ENCODE measurements at regions of chr20 and their contacts with region 1.

Region 1: DNA sequence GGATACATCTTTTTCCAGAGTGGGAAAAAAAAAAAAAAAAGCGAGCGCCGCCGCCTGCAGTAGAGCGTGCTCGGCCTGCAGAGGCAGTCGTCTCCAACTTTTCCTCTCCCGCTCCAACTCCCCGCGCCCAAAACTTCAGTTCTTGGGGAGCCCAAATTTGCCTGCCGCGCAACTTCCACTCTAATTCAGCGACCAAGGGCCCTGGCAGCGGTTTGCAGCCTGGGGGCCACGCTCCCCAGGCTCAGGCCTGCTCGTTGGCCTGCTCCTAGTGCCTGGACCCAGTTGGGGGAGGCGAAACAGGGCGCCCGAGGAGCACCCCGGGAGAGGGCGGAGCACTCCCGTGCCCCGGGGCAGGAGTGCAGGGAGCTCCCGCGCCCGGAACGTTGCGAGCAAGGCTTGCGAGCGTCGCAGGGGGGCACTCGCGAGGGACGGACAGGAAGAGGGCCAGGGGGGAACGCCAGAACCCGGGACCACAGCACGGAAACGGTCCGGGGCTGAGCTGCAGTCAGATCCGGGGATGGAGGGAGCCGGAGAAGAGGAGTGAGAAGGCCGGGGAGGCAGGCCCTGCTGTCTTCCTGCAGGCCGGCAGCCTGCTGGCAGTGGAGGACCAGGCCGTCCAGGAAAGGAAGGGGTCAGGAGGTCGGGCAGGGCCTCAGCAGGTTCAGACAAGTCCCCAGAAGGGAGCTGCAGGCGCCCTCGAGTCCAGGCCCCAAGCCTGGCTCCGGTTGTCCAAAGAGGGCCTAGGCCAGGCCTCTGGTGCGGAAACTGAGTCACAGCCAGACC is at the start of gene STX16:
- DNase-seq: peak; percentile 90
- ATAC-seq: peak; percentile 76
- H3K4me3 Mint-ChIP-seq: peak within 1 kb of the TSS; percentile 97
- H3K27ac Mint-ChIP-seq: peak within 1 kb of the TSS; percentile 99
- H3K4me1 Mint-ChIP-seq: peaks cover 7% of the 10 kb centered on the region
- H3K27me3 Mint-ChIP-seq: peaks cover 4% of the 10 kb centered on the region
- total RNA-seq, gene STX16: 190 to 195 TPM

Region 2: DNA sequence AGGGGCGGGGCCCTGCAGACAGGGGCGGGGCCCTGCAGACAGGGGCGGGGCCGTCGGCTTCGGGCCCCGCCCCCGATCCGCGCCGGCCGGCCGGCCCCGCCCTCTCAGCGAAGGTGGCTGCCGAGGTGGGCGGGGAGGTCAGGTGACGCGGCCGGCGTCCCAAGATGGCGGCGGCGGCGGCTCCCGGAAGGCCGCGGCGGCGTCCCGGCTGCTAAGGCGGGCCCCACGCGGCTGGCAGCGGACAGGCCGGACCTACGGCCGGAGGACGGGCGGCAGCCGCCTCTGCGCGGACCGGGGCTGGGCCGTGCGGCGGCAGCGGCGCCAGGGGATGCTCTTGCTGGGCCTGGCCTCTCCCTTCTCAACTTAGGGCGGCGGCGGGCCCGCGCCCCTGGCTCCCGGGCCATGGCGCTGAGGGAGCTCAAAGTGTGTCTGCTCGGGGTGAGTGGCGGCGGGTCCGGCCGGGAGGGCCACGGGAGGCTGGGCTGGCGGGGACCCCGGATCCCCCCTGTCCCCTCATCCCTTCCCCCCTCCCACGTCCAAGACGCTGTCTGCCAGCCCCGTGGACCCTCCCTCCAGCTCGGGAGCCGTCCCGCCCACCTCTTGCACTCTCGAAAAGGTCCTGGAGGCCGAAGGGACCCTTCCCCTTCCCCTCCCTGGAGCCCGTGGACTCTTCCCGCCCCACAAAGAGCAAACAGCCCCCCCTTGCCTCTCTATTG is 341.2 kb before region 1 on chr20 and contains the start of gene RAB22A:
- POLR2A ChIA-PET with region 1: interaction called, 12 read pairs
- DNase-seq: peak; percentile 90
- ATAC-seq: peak; percentile 70
- H3K4me3 Mint-ChIP-seq: peak within 1 kb of the TSS; percentile 96
- H3K27ac Mint-ChIP-seq: peak within 1 kb of the TSS; percentile 92
- H3K4me1 Mint-ChIP-seq: peaks cover 41% of the 10 kb centered on the region
- H3K27me3 Mint-ChIP-seq: no peaks in the 10 kb centered on the region
- total RNA-seq, gene RAB22A: 17.3 to 18.5 TPM

Region 3: DNA sequence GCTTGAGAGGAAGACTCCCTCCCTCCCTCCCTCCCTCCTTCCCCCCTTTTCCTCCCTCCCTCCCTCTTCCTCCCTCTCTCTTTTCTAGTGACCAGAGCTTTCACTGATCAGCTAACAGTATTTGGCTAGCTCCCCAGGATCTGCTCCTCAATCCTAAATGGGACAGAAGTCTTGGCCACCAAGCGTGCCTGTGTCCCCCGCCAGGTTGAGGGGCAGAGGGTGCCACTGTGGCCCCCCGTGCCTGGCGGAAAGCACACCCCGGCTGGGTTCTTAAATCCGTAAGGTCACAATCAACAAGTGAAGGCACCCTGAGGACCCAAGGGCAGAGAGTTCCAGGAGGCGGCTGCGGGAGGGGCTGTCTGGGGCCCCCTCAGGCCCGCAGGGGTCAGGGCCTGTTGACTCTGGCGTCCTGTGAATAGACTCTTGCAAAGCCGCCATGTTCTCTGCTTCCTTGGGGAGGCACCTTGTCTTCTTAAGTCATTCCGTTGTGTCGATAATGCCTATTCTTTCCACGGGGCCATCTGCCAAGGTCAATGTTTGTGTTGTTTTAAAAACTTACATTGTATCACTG is 38.8 kb before region 1 on chr20:
- POLR2A ChIA-PET with region 1: no interaction called
- DNase-seq: no peak
- ATAC-seq: no peak
- H3K4me3 Mint-ChIP-seq: no peak overlapping the region
- H3K27ac Mint-ChIP-seq: no peak overlapping the region
- H3K4me1 Mint-ChIP-seq: no peaks in the 10 kb centered on the region
- H3K27me3 Mint-ChIP-seq: no peaks in the 10 kb centered on the region

Region 4: GRCh38 chr20:58627212-58628072 is 23.5 kb before region 1 on chr20:
- POLR2A ChIA-PET with region 1: no interaction called
- DNase-seq: no peak
- ATAC-seq: no peak
- H3K4me3 Mint-ChIP-seq: no peak overlapping the region
- H3K27ac Mint-ChIP-seq: no peak overlapping the region
- H3K4me1 Mint-ChIP-seq: no peaks in the 10 kb centered on the region
- H3K27me3 Mint-ChIP-seq: peaks cover 5% of the 10 kb centered on the region

Region 5: DNA sequence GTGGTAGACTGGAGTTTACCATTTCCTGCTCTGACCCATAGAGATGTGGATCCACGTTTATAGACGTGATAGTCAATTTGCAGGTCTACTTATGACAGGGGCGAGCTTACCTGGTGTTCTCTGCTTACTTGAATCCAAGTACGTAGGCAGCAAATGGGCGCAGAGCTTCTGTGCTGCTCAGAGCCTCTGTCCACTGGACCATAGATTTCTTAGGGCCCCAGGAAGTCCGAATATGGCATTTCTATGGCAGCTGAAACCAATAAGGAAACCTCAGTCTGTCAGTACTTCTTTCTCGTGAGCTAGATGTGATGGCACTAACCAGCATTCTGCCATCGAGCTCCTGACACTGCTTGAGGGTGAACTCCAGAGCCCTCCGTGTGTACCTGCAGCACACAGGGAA is 22.2 kb after region 1 on chr20:
- POLR2A ChIA-PET with region 1: interaction called, 10 read pairs
- DNase-seq: no peak
- ATAC-seq: no peak
- H3K4me3 Mint-ChIP-seq: no peak overlapping the region
- H3K27ac Mint-ChIP-seq: no peak overlapping the region
- H3K4me1 Mint-ChIP-seq: peaks cover 15% of the 10 kb centered on the region
- H3K27me3 Mint-ChIP-seq: no peaks in the 10 kb centered on the region

Region 6: GRCh38 chr20:58722877-58723627 is 72.1 kb after region 1 on chr20:
- POLR2A ChIA-PET with region 1: no interaction called
- DNase-seq: no peak
- ATAC-seq: no peak
- H3K4me3 Mint-ChIP-seq: no peak overlapping the region
- H3K27ac Mint-ChIP-seq: no peak overlapping the region
- H3K4me1 Mint-ChIP-seq: no peaks in the 10 kb centered on the region
- H3K27me3 Mint-ChIP-seq: peaks cover 43% of the 10 kb centered on the region

Region 7: GRCh38 chr20:58839474-58839874 is 188.5 kb after region 1 on chr20:
- POLR2A ChIA-PET with region 1: interaction called, 10 read pairs
- DNase-seq: peak; percentile 57
- ATAC-seq: no peak
- H3K4me3 Mint-ChIP-seq: peak overlapping the region; percentile 55
- H3K27ac Mint-ChIP-seq: no peak overlapping the region
- H3K4me1 Mint-ChIP-seq: peaks cover 19% of the 10 kb centered on the region
- H3K27me3 Mint-ChIP-seq: peaks cover 78% of the 10 kb centered on the region

Region 8: DNA sequence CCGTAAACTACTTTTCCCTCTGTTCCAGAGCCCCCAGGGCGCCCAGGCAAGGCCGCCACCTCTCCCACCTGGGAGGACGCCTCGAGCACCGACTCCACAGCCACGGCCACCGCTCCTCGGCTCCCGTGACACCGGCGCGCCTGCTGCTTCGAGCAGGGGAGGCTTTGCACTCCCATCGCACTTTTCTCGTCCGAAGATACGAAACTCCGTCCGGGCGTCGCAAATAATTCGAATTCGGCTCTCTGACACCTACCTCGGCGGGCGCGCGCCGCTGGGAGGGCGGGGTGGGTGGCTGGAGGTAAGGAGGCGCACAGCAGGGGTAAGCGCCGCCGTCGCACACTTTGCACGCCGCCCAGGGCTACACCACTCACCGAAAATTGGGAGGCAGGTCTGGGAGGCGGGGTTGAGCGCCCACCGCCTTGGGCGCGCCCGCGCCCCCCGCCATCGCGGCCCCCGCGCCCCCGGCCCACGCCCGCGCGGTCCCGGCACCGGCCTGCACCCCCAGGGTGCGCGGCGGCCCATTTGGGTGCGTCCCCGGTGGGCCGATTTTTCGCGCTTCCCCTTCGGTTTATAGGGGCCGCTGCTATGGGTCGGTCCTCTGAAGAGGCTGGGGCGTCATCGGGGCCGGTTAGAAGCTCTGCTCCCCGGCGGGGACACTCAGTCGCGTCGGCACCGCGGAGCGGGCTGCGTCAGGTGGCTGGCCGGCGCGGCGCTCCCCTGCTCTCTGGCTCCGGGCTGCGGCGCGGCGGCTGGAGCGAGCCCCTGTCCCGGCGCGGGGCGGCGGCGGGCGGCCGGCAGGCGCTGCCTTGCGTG is 237.8 kb after region 1 on chr20:
- POLR2A ChIA-PET with region 1: interaction called, 34 read pairs
- DNase-seq: peak; percentile 83
- ATAC-seq: peak; percentile 49
- H3K4me3 Mint-ChIP-seq: peak overlapping the region; percentile 85
- H3K27ac Mint-ChIP-seq: peak overlapping the region; percentile 85
- H3K4me1 Mint-ChIP-seq: peaks cover 24% of the 10 kb centered on the region
- H3K27me3 Mint-ChIP-seq: no peaks in the 10 kb centered on the region